Activated B cell treated with CpG ODN at 0.5 μM for 24 hours (primary cell): ENCODE measurements at regions of chr11 and their contacts with region 1.

Region 1: GRCh38 chr11:103601225-103601846 is 435.1 kb upstream of the DDI1 start:
- DNase-seq: no peak
- ATAC-seq: peak; percentile 37
- H3K4me3 Mint-ChIP-seq: no peak overlapping the region
- H3K27ac Mint-ChIP-seq: no peak overlapping the region
- H3K4me1 Mint-ChIP-seq: no peaks in the 10 kb centered on the region
- H3K27me3 Mint-ChIP-seq: peaks cover 12% of the 10 kb centered on the region
- CTCF ChIP-seq: peak; percentile 43

Region 2: DNA sequence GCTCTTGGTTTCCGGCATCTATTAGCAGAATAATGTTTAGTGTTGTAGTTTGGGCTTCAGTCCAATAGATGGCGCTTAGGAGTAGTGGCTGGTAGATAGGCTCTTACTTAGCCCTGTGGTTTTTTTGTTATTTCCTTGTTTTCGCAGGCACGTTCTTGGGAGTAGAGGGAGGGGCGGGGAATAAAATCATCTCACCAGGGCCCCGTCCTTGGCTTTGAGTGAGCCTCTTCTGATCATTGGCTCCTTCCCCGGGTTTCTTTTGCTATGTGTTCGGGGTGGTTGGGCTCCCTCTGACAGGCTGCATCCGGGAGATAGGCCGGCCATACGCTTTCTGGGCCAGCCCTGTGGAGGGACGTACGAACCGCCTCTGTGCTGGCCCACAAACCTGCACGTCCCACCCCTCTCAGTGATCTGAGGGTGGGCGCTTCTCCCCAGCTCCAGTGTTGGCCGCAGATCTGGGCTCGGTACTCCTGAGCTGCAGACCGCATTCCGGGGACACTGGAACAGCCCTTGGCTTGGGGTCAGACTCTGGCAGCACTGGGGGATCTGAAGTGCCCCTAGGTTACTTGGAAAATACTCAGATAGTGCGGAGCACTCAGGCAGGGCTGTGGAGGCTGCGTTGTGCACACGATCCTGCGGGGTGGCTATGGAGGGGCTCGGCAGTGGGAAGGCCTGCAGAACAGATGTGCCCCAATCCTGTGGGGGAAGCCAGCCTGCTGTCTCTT is 275.1 kb before region 1 on chr11:
- CTCF ChIA-PET with region 1: no interaction called
- POLR2A ChIA-PET with region 1: no interaction called
- intact Hi-C with region 1: loop called (anchors 1 kb)
- DNase-seq: no peak
- ATAC-seq: peak; percentile 67
- H3K4me3 Mint-ChIP-seq: no peak overlapping the region
- H3K27ac Mint-ChIP-seq: no peak overlapping the region
- H3K4me1 Mint-ChIP-seq: peaks cover 3% of the 10 kb centered on the region
- H3K27me3 Mint-ChIP-seq: no peaks in the 10 kb centered on the region
- CTCF ChIP-seq: no peak

Region 3: DNA sequence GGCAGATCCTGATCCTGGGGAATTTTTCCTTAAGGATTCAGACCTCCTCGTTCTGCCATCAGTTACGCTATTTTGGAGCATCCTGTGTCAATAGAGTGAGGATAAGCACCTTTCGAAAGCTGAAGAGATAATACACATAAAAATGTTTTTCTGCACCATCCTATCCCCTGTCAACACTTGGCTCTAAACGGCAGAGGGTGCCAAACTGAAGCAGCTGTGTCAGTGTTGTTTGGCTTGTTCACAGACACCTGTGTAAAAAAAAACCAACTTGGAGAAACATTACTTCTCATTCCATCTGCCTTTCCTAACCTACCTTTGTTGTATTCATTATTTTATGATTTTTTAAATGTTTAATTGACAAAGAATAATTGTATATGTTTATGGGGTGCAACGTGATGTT is 18.1 kb after region 1 on chr11:
- CTCF ChIA-PET with region 1: no interaction called
- POLR2A ChIA-PET with region 1: no interaction called
- intact Hi-C with region 1: no loop called
- DNase-seq: no peak
- ATAC-seq: no peak
- H3K4me3 Mint-ChIP-seq: no peak overlapping the region
- H3K27ac Mint-ChIP-seq: no peak overlapping the region
- H3K4me1 Mint-ChIP-seq: no peaks in the 10 kb centered on the region
- H3K27me3 Mint-ChIP-seq: no peaks in the 10 kb centered on the region
- CTCF ChIP-seq: no peak

Region 4: DNA sequence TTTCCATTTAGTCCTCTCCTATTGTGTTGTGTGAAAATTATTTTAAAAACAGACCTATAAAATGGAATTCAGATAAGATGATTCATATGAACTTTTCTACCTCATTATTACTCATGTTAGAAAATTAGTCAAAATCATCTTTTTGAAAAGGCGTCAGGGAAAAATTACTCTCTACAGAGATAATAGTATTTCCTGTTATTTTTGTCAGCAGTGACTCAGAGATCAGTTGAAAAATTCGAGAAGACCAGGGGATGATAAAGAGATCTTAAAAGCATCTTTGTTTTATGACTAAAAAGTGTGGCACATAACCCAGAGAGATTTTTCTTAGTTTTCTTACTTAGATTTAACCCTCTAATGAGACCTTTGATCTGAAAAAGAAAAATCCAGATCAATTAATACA is 1696.1 kb after region 1 on chr11:
- CTCF ChIA-PET with region 1: no interaction called
- POLR2A ChIA-PET with region 1: no interaction called
- intact Hi-C with region 1: no loop called
- DNase-seq: no peak
- ATAC-seq: no peak
- H3K4me3 Mint-ChIP-seq: no peak overlapping the region
- H3K27ac Mint-ChIP-seq: no peak overlapping the region
- H3K4me1 Mint-ChIP-seq: no peaks in the 10 kb centered on the region
- H3K27me3 Mint-ChIP-seq: no peaks in the 10 kb centered on the region
- CTCF ChIP-seq: no peak